Ovary (tissue), 10 donors: ENCODE measurements at regions of chr1 and their contacts with region 1.

Region 1: DNA sequence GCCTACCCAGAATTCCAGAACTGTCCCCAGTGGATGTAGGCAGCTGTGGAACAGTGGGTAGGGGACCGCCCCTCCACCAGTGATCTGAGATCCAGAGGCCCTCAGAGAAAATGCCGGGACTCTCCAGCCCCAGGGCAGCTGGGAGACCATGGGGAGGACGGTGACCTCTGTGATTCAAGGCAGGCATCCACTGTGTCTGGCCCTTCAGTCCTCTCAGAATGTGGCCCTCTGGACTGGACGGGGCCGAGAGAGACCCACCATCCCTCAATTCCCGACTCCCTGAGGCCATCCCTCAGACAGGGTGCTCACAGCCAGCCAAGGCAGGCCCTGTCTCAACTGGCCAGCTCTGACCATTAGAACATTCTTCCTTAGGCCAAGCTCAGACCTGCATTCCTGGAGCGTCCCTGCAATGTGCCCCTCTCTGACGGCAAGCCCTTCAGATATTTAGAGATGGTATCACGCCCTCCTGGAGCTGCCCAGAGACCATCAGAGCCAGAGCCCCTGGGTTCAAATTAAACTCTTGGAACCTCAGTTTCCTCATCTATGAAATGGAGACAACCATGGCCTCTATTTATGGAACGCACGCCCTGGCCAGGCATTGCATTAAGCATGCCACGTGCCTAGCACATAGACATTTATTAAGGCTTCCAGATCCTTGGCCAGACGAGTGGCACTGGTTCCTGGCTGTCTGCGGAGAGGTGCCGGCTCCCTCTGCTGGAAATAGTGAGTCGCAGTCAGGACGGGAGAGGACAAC is 9.6 kb upstream of the EPS8L3 start:
- DNase-seq: peak; percentile 79 to 88 (median 84)
- H3K4me3 ChIP-seq: no peak overlapping the region
- H3K27ac ChIP-seq: no peak overlapping the region
- H3K4me1 ChIP-seq: no peaks in the 10 kb centered on the region
- H3K27me3 ChIP-seq: no peaks in the 10 kb centered on the region
- CTCF ChIP-seq: peak; percentile 71 to 90 (median 88)
- EP300 ChIP-seq: no peak
- POLR2A ChIP-seq: no peak

Region 2: DNA sequence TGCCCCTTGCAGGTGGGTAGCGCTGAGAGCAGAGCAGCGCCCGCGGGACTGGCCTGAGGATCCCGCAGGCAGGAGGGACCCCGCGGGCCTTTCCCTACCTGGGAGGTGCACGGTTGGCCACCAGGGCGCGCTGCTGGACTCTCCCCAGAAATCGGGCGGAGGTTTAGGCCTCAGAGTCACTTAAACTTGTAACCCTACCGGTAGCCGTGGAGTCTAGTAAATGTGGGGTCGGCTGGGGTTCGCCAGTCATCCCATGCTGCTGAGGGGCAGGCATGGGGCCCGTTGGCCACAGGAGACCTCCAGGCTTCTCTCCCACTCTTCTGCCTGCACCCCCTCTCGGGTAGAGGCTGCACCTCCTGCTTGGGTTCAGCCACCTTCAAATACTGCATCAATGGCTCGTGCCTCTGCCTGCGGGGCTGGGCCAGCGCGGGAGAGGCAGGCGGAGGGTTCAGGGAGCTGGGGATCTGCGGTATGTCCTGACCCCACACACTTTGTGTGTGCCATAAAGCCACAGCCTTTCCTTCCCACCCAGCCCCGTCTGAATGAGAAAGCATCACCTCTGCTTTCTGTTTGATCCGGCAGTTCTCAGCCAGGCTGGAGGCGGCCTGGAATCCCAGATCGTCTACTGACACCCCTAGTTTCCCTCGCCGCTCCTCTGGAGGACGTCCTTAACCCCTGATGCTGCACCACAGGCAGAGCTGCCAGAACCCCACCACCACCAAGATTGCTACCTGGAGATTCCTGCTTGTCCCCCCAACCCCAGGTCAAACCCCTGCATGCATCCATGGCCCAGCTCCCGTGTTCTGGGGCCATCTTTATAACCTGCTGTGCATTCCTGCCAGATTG is 129.7 kb before region 1 on chr1:
- intact Hi-C with region 1: loop called (anchors 2 to 5 kb)
- DNase-seq: peak; percentile 75 to 92 (median 88)
- H3K4me3 ChIP-seq: no peak overlapping the region
- H3K27ac ChIP-seq: peak overlapping the region in 1 of 2 donors; percentile 35
- H3K4me1 ChIP-seq: no peaks in the 10 kb centered on the region
- H3K27me3 ChIP-seq: no peaks in the 10 kb centered on the region
- CTCF ChIP-seq: peak; percentile 63 to 87 (median 71)
- EP300 ChIP-seq: no peak
- POLR2A ChIP-seq: no peak

Region 3: DNA sequence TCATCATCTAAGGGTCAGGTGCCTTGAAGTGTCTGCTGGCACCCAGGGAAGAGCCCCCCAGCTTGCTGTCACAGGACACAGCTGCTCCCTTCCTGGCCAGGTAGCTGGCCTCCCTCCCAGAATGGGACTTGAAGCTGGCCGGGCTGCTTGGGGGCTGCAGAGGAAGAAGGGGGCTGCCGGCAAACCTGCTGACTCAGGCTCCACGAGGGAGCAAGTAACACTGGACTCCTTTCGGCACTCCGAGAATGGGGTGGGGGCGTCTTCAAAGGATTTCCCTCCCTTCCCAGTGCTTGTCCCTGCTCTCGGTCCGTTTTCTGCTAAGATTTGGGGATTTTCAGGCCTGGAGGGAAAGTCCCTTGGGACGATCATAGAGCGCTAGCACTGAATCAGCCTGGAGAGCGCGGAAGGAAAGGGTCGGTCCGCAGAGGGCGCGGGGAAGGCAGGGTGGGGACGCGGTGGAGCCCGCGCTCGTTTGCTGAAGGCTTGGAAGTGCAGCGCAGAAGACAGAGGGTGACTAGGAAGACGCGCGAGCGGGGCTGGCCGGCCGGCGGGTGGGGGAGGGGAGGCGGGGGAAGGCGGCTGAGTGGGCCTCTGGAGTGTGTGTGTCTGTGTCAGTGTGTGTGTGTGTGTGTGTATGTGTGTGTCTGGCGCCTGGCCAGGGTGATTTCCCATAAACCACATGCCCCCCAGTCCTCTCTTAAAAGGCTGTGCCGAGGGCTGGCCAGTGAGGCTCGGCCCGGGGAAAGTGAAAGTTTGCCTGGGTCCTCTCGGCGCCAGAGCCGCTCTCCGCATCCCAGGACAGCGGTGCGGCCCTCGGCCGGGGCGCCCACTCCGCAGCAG is 137.0 kb after region 1 on chr1 and contains the start of gene CSF1:
- intact Hi-C with region 1: loop called in 1 of 4 experiments (anchors 10 kb)
- DNase-seq: peak; percentile 87 to 94 (median 92)
- H3K4me3 ChIP-seq: peak within 1 kb of the TSS; percentile 87
- H3K27ac ChIP-seq: peak within 1 kb of the TSS; percentile 63 to 68
- H3K4me1 ChIP-seq: peaks cover 11% of the 10 kb centered on the region
- H3K27me3 ChIP-seq: no peaks in the 10 kb centered on the region
- CTCF ChIP-seq: no peak
- EP300 ChIP-seq: no peak
- POLR2A ChIP-seq: peak; percentile 72
- total RNA-seq, gene CSF1: 24.2 to 57.6 (median 44.3) TPM

Region 4: GRCh38 chr1:110106013-110106941 is 333.0 kb after region 1 on chr1:
- intact Hi-C with region 1: loop called in 2 of 4 experiments (anchors 5 to 10 kb)
- DNase-seq: peak; percentile 63 to 80 (median 76)
- H3K4me3 ChIP-seq: no peak overlapping the region
- H3K27ac ChIP-seq: no peak overlapping the region
- H3K4me1 ChIP-seq: no peaks in the 10 kb centered on the region
- H3K27me3 ChIP-seq: no peaks in the 10 kb centered on the region
- CTCF ChIP-seq: peak; percentile 84 to 93 (median 85)
- EP300 ChIP-seq: no peak
- POLR2A ChIP-seq: no peak